ENCODE measurements at regions of chr6 and their contacts with region 1.

Region 1: DNA sequence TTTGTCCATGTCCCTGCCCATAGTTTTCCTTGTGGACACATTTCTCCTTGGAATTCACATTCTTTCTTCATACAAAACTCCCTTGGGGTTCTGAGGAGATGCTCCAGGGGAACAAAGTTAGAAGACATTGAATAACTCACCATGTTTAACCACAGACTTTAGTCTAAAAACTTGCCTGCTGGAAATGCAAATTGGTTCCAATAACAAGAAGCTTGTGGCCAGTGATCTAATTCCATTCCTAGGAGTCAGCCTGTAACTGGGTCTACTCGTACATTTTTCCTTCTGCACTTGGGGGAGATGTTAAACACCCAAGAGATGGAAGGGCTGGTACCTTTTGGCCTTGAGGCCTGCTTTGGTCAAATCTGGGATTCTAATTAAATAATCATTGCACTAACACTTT is 60.2 kb downstream of the SCML4 start:
- DNase-seq: no peak
- H3K4me3 ChIP-seq: no peak overlapping the region
- H3K27ac ChIP-seq: no peak overlapping the region
- H3K4me1 ChIP-seq: no peaks in the 10 kb centered on the region
- H3K27me3 ChIP-seq: no peaks in the 10 kb centered on the region
- CTCF ChIP-seq: no peak

Region 2: DNA sequence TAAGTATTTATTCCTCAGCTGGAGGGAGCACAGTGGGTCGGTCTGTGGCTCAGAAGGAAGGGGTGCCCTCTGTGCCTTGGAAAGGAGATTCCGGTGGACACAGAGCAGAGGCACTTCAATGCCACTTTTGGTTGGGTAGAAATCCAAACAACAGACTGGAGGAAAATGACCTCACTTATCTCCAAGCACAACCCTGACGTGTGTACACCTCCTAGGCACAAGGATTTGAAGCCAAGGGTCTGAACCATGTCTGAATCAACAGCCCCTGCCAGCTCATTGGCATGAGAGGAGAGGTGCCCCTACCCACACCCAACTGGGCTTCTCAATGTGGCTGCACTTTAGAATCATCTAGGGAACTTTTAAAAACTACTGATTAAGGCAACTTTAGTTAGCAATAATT is 802.8 kb before region 1 on chr6:
- CTCF ChIA-PET with region 1: no interaction called
- POLR2A ChIA-PET with region 1: interaction called, 12 read pairs
- intact Hi-C with region 1: no loop called
- DNase-seq: no peak
- H3K4me3 ChIP-seq: no peak overlapping the region
- H3K27ac ChIP-seq: no peak overlapping the region
- H3K4me1 ChIP-seq: no peaks in the 10 kb centered on the region
- H3K27me3 ChIP-seq: no peaks in the 10 kb centered on the region
- CTCF ChIP-seq: no peak